ENCODE measurements at regions of chr3 and their contacts with region 1.

Region 1: DNA sequence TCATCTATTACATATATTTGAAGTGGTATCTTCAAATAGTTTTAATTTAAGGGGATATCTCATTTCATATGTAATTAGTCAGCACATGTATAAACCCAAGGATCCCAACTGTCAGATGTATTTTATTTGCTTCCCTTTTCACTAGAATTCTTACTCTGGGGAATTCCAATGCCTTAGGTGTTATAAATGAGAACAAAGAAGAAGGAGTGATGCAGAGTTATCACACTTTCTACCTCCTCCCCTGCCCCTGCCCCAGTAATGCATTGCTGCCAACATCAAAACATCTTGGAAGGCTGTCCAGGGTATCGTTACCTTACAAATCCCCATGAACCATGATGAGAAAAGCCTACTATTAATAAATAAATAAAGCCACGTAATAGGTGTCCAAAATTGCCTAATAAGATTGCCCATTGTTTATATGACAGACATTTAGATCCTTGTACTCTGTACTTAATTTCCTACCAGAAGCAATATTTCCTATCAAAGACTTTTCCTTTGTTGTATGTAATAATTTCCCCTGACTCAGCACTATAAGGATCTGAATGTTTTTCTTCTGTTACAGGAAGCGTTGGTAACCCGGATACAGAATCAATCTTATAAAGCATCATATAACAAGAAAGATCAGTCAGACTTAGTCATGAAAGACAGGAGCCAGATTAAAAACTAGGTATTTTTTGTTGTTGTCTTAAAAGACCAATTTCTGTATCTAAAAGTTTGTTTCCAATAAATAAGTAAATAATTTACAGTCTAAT is 38.8 kb downstream of the CBLB start:
- DNase-seq: no peak
- H3K4me3 ChIP-seq: no peak overlapping the region
- H3K27ac ChIP-seq: no peak overlapping the region
- H3K4me1 ChIP-seq: no peaks in the 10 kb centered on the region
- H3K27me3 ChIP-seq: no peaks in the 10 kb centered on the region
- CTCF ChIP-seq: no peak
- EP300 ChIP-seq: no peak
- POLR2A ChIP-seq: no peak

Region 2: GRCh38 chr3:104244680-104245220 is 1585.3 kb before region 1 on chr3:
- intact Hi-C with region 1: loop called in 1 of 4 experiments (anchors 5 kb)
- DNase-seq: no peak
- H3K4me3 ChIP-seq: no peak overlapping the region
- H3K27ac ChIP-seq: no peak overlapping the region
- H3K4me1 ChIP-seq: no peaks in the 10 kb centered on the region
- H3K27me3 ChIP-seq: no peaks in the 10 kb centered on the region
- CTCF ChIP-seq: no peak
- EP300 ChIP-seq: no peak
- POLR2A ChIP-seq: no peak

Region 3: DNA sequence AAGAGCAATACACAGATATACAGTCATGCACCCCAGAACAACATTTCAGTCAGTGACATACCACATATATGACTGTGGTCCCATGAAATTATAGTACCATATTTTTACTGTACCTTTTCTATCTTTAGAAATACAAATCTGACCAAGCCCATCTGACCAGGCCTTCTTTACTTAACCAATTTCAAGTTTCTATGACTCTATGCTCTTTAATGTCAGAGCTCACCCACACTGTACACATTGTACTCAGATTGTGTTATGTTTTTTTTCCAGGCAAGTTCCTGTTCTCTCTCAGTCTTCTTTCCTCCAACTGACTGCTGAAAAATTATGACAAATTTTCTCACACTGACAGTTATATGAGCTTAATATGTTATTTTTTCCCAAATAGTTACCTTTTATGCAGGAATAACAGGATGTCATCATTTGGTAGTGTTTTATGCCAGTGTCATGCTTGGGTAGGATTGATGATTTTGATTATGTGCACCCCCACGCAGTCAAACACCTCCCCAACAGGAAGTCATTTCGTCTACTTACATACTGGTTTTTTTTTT is 46.8 kb after region 1 on chr3:
- intact Hi-C with region 1: no loop called
- DNase-seq: no peak
- H3K4me3 ChIP-seq: no peak overlapping the region
- H3K27ac ChIP-seq: no peak overlapping the region
- H3K4me1 ChIP-seq: no peaks in the 10 kb centered on the region
- H3K27me3 ChIP-seq: no peaks in the 10 kb centered on the region
- CTCF ChIP-seq: no peak
- EP300 ChIP-seq: no peak
- POLR2A ChIP-seq: no peak

Region 4: DNA sequence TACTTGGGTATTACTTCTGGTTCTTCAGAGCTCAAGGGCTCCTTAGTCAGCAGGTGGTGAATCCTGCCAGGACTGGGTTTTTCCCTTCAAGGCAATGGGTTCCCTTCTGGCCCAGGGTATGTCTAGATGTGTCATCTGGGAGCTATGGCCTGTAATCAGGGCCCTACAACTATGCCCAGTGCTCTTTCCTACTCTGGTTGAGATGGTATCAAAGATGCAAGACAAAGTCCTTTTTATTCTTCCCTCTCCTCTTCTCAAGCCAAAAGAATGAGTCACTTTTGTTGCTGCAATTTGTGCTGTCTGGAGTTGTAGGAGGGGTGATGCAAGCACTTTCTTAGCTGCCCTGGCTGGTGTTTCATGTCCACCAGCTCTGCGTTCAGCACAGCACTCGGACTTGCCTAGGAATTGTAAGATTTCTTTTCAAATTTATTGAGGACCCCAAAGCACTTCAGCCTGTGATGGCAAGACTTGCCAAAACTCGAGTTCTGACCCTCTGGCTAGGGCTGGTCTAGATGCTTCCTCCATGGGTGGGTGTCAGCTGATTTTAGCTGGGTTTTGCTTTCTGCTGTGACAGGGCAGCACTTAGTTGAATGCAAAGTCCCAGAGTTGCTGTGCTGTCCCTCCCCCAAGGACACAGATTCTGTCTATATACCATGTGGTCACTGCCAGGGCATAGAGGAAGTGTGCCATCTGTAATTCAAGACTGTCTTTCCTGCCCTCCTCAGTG is 167.9 kb after region 1 on chr3:
- intact Hi-C with region 1: no loop called
- DNase-seq: no peak
- H3K4me3 ChIP-seq: no peak overlapping the region
- H3K27ac ChIP-seq: no peak overlapping the region
- H3K4me1 ChIP-seq: no peaks in the 10 kb centered on the region
- H3K27me3 ChIP-seq: no peaks in the 10 kb centered on the region
- CTCF ChIP-seq: no peak
- EP300 ChIP-seq: no peak
- POLR2A ChIP-seq: no peak

Region 5: GRCh38 chr3:106068795-106069194 is 238.7 kb after region 1 on chr3:
- intact Hi-C with region 1: no loop called
- DNase-seq: peak in 1 of 5 donors; percentile 50
- H3K4me3 ChIP-seq: no peak overlapping the region
- H3K27ac ChIP-seq: peak overlapping the region in 1 of 2 donors; percentile 75
- H3K4me1 ChIP-seq: peaks cover 4% of the 10 kb centered on the region
- H3K27me3 ChIP-seq: no peaks in the 10 kb centered on the region
- CTCF ChIP-seq: no peak
- EP300 ChIP-seq: no peak
- POLR2A ChIP-seq: no peak

Measured in ovary (tissue), 10 donors.